PC-3 (cell line): ENCODE measurements at regions of chr17 and their contacts with region 1.

Region 1: GRCh38 chr17:6555331-6556120 is 829 bp downstream of the PITPNM3 start:
- DNase-seq: peak; percentile 58
- ATAC-seq: peak; percentile 41
- H3K4me3 ChIP-seq: peak overlapping the region; percentile 82
- H3K27ac ChIP-seq: peak overlapping the region; percentile 74
- H3K4me1 ChIP-seq: peaks cover 45% of the 10 kb centered on the region
- H3K27me3 ChIP-seq: no peaks in the 10 kb centered on the region
- CTCF ChIP-seq: no peak

Region 2: GRCh38 chr17:6402258-6402657 is 153.3 kb before region 1 on chr17:
- CTCF ChIA-PET with region 1: no interaction called
- POLR2A ChIA-PET with region 1: no interaction called
- intact Hi-C with region 1: no loop called
- DNase-seq: no peak
- ATAC-seq: no peak
- H3K4me3 ChIP-seq: no peak overlapping the region
- H3K27ac ChIP-seq: no peak overlapping the region
- H3K4me1 ChIP-seq: no peaks in the 10 kb centered on the region
- H3K27me3 ChIP-seq: no peaks in the 10 kb centered on the region; the same call in 1 of the 2 replicates
- CTCF ChIP-seq: no peak

Region 3: DNA sequence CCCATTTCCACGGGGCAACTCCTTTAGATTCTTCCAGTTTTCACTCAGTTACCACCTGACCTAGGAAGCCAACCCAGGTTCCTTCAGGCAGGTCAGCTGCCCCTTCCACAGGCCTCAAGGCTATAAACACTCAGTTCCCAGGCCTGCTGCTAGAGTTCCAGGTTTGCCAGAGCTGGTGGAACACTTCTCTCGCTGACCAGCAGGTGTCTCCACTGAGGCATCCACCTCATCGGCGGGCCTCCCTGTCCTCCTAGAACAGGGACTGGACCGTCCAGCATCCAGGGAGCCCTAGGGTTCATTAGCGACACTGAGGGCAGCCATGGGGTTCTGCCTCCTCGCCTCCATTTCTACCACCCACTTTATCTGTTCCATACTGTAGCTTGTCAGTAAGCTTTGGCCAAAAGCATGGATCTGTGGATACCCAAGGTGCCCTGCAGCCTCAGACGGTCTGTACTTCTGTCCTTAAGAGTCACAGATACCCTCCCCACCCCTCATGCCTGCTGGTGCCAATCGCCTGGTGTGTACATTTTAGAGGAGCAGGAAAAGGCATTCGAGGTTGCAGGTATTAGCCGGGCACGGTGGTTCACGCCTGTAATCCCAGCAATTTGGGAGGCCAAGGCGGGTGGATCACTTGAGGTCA is 82.3 kb before region 1 on chr17:
- CTCF ChIA-PET with region 1: interaction called, 4 read pairs
- POLR2A ChIA-PET with region 1: no interaction called
- intact Hi-C with region 1: loop called (anchors 2 kb)
- DNase-seq: peak; percentile 76
- ATAC-seq: peak; percentile 85
- H3K4me3 ChIP-seq: no peak overlapping the region
- H3K27ac ChIP-seq: no peak overlapping the region
- H3K4me1 ChIP-seq: peaks cover 15% of the 10 kb centered on the region
- H3K27me3 ChIP-seq: no peaks in the 10 kb centered on the region
- CTCF ChIP-seq: peak; percentile 84

Region 4: DNA sequence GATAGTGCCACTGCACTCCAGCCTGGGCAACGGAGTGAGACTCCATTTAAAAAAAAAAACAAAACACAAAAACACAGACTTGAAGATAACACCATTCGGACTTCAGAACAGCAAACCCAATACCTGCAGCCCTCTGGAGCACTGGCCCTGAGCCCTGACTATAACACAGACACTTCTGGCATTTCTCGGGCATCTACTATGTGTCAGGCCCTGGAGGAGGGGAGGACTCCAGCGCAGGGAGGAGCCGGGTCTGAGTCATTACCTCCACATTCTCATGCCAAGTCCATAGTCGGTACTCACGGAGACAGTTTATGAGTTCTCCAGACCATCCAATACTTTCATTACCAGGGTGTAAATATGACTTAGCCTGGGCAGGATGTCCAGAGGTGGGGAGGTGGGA is 48.0 kb before region 1 on chr17:
- CTCF ChIA-PET with region 1: no interaction called
- POLR2A ChIA-PET with region 1: no interaction called
- intact Hi-C with region 1: loop called (anchors 5 kb)
- DNase-seq: peak; percentile 90
- ATAC-seq: peak; percentile 89
- H3K4me3 ChIP-seq: no peak overlapping the region
- H3K27ac ChIP-seq: peak overlapping the region; percentile 93
- H3K4me1 ChIP-seq: peaks cover 40% of the 10 kb centered on the region
- H3K27me3 ChIP-seq: no peaks in the 10 kb centered on the region
- CTCF ChIP-seq: no peak

Region 5: GRCh38 chr17:6534846-6535514 is 20.5 kb before region 1 on chr17:
- CTCF ChIA-PET with region 1: no interaction called
- POLR2A ChIA-PET with region 1: no interaction called
- intact Hi-C with region 1: no loop called
- DNase-seq: no peak
- ATAC-seq: no peak
- H3K4me3 ChIP-seq: no peak overlapping the region
- H3K27ac ChIP-seq: no peak overlapping the region
- H3K4me1 ChIP-seq: no peaks in the 10 kb centered on the region
- H3K27me3 ChIP-seq: no peaks in the 10 kb centered on the region
- CTCF ChIP-seq: no peak

Region 6: GRCh38 chr17:6995431-6996255 is 440.1 kb after region 1 on chr17 and contains the start of gene ALOX12:
- CTCF ChIA-PET with region 1: no interaction called
- POLR2A ChIA-PET with region 1: no interaction called
- intact Hi-C with region 1: no loop called
- DNase-seq: no peak
- ATAC-seq: no peak
- H3K4me3 ChIP-seq: no peak within 1 kb of the TSS
- H3K27ac ChIP-seq: no peak within 1 kb of the TSS
- H3K4me1 ChIP-seq: no peaks in the 10 kb centered on the region
- H3K27me3 ChIP-seq: no peaks in the 10 kb centered on the region
- CTCF ChIP-seq: no peak
- total RNA-seq, gene ALOX12: not detected in 2 replicates